ENCODE measurements at regions of chr5 and their contacts with region 1.

Region 1: GRCh38 chr5:129767906-129768380 is 20.0 kb downstream of the MINAR2 start:
- DNase-seq: peak; percentile 84
- H3K27ac ChIP-seq: no peak overlapping the region
- CTCF ChIP-seq: peak; percentile 100

Region 2: DNA sequence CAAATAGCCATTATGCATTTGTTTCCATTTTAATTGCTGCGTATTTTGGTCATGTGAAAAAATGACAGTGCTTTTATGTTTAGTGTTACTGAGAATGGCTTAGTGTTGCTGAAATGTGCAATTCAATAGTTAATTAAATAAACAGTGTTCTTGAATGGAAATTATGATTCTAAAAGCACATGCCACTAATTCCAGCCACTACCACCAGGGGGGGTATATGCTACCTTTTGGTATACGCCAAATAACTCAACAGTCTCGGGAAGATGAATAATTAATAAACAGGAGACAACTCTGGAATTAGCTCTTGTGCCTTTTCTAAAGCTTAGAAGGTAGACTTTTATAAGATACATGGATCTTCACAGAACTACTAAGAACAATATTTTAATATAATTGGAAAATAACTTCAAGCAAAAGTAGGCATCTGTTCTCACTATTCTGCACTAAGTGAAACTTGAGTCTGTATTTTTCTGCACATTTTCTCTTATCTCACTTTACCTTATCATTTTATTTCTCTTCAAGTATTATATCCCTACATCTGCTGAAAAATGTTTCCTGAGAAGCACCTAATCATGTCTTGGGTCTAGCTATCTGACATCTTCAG is 103.5 kb before region 1 on chr5:
- CTCF ChIA-PET with region 1: interaction called, 14 read pairs
- POLR2A ChIA-PET with region 1: no interaction called
- DNase-seq: peak; percentile 49
- H3K27ac ChIP-seq: no peak overlapping the region
- CTCF ChIP-seq: peak; percentile 87

Region 3: GRCh38 chr5:129718471-129719090 is 49.4 kb before region 1 on chr5:
- CTCF ChIA-PET with region 1: interaction called, 10 read pairs
- POLR2A ChIA-PET with region 1: no interaction called
- DNase-seq: no peak
- H3K27ac ChIP-seq: no peak overlapping the region
- CTCF ChIP-seq: no peak

Region 4: DNA sequence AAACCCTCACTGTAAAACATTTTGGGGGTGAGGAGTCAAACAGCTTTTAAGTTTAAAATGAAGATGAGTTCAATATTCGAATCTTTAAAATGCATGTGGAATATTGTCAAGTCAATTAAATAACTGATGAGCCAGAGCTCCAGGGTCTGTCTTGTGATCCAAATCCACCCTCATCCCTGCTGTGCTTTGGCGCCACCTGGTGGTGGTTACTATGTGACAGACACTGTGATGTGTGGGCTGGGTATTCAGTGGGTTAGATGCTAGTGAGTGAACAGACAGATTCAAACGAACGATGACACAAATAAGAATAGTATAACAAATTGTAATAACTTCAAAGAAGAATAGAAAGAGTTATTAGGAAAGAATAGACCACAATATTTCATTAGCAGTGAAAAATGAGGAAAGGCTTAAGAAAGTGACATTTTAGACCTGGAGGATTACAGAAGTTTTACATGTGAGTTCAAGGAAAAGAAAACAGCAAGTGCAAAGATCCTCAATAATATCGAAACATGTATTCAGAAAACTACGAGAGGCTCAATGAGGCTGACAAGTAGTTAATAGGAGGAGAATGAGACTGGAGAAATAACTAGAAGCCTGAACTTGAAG is 84.9 kb after region 1 on chr5:
- CTCF ChIA-PET with region 1: interaction called, 78 read pairs
- POLR2A ChIA-PET with region 1: no interaction called
- DNase-seq: peak; percentile 84
- H3K27ac ChIP-seq: no peak overlapping the region
- CTCF ChIP-seq: peak; percentile 99

Region 5: DNA sequence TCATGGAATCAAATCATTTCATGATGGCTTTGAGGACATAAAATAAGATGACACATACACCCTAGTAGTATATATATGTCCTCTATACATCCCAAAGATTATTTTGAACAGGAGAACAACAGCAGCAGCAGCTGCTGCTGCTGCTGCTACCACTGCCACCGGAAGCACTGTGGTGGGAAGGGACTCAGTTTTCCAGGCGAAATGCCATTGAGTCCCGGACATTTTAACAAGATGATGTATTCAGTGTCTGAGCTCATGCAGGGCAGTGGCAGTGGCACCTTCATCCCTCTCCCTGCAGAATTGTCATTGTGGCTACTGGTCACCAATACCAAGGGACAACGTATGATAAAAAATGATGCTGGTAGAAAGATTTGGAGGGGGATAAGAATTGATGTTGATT is 287.6 kb after region 1 on chr5:
- CTCF ChIA-PET with region 1: no interaction called
- POLR2A ChIA-PET with region 1: no interaction called
- DNase-seq: no peak
- H3K27ac ChIP-seq: no peak overlapping the region
- CTCF ChIP-seq: no peak

Measured in RWPE1 (cell line).